ENCODE measurements at regions of chr14 and their contacts with region 1.

Region 1: DNA sequence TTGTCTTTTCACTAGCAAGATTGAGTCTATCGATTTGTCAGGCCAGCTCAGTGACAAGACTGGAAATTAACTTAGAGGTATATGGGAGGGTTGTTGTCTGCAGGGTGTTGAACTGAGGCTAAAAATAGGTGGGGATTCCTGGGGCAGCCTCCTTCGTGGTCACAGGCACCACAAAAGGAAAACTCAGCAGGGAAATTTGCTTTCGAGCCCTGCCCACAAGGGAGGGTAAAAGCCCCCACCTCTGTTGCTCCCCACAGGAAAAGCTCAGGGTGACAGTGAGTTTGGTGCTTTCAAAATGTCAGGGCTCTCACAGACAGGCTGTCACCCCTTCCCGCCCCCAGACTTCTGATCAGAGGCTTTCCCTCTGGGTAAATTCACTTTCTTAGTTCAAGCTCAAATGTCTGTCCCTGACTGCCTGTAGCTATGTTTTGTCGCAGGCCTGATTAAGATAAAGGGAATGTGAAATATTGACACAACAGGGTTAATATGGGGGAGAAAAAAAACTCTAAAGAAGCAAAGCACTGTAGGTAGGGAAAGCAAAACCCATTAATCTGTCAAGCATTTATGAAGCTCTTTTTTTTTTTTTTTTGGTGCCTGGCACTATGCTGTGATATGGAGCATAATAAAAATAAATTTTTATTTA is 11.7 kb upstream of the NFKBIA start:
- DNase-seq: no peak
- ATAC-seq: no peak

Region 2: DNA sequence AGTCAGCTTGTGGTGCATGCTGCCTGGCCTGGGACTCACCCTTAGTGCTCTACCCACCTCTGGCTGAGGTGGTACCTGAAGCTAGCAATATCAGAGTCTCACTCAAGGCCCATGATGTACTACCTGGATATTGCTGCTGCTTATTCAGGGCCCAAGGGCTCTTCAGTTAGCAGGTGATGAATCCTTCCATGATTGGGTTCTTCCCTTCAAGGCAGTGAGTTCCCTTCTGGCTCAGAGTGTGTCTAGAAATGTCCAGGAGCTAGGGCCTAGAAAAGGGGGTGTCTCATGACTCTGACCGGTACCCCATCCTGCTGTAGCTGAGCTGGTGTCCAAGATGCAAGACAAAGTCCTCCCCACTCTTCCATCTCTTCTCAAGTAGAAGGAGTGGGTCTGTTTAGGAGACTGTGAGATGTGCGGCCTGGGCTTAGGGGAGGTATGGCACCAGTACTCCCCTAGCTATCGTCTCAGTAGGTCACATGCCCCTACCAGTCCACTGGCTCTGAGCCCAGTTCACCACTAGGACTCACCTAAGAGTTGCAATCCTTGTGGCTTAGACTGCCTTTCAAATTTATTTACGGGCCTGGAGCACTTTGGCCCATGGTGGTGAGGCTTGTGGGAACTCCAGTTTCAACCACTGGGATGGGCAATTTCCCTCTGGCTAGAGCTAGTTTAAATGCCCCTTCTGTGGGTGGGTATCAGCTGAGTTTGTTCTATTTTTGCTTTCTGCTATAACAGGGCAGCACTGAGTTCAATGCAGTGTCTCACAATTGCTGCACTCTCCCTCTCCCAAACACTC is 281.7 kb before region 1 on chr14:
- intact Hi-C with region 1: loop called (anchors 5 kb)
- DNase-seq: no peak
- ATAC-seq: no peak

Region 3: GRCh38 chr14:35140718-35141581 is 275.3 kb before region 1 on chr14:
- intact Hi-C with region 1: loop called (anchors 5 kb)
- DNase-seq: no peak
- ATAC-seq: no peak

Measured in sciatic nerve (tissue), 2 donors.